Common myeloid progenitor, CD34-positive (primary cell): ENCODE measurements at regions of chr19 and their contacts with region 1.

Region 1: GRCh38 chr19:29873024-29873800 is 61.4 kb downstream of the CCNE1 start:
- DNase-seq: peak; percentile 63 to 73 (median 69)
- H3K4me3 ChIP-seq: peak overlapping the region; percentile 13 to 68 (median 58)
- H3K27ac ChIP-seq: no peak overlapping the region
- H3K4me1 ChIP-seq: peaks cover 0 to 21% (median 17%) of the 10 kb centered on the region in 4 experiments
- H3K27me3 ChIP-seq: peaks cover 0 to 22% (median 4%) of the 10 kb centered on the region in 5 experiments

Region 2: DNA sequence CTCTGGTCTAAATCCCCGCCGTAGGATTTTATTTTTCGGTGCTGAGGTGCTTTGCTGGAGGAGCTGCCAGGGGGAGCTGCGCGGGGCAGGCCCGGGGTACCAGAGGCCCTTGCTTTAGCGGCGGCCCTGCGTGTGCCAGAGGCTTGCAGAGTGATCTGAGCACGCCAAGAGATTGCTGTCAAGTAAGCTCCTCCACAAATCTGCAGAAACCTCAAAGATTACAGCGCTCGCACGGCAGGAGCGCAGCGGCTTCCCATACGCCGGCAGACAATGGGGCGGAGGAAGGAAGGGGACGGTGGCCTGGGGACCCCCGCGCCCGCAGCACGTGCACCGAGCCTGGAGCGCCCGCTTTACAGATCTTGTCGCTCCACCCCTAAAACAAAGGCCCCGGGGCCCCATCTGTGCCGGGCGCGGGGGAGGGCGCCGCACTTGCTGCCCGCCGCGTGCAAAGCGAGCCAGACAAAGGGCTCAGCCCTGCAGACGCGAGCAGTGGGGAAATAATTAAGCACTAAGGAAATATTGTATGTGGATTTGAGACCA is 149.0 kb before region 1 on chr19:
- CTCF ChIA-PET with region 1: interaction called, 12 read pairs
- POLR2A ChIA-PET with region 1: no interaction called
- DNase-seq: peak; percentile 35 to 80 (median 72)
- H3K4me3 ChIP-seq: peak overlapping the region in 6 of 7 experiments; percentile 29 to 58 (median 45)
- H3K27ac ChIP-seq: no peak overlapping the region
- H3K4me1 ChIP-seq: peaks cover 0 to 16% (median 14%) of the 10 kb centered on the region in 4 experiments
- H3K27me3 ChIP-seq: no peaks in the 10 kb centered on the region

Region 3: DNA sequence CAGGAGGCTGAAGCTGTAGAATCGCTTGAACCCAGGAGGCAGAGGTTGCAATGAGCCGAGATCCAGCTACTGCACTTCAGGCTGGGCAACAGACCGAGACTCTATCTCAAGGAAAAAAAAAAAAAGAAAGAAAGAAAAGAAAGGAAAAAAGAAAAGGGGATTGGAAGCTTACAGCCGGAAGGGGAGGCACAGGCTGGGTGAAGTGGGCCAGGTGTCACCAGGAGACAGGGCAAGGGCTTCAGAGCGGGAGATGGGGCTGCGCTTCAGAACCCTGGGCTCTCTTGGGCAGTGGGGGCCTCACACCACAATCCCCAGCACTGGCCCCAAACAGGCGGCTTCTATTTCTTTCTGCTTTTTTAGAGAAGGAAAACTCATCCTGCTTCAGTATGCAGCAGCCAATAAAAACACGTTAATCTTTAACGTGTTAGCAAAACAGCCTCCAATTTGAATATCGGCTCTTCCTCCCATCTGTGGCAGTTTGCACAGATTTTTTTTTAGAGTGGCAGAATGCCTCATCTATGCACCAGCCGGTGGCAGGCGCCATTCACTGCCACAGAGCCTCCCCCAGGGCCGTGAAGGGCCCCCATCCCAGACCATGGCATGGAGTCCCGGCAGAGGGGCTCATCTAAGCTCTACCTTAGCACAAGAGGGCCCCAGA is 111.5 kb before region 1 on chr19:
- CTCF ChIA-PET with region 1: interaction called, 39 read pairs
- POLR2A ChIA-PET with region 1: no interaction called
- DNase-seq: no peak
- H3K4me3 ChIP-seq: no peak overlapping the region
- H3K27ac ChIP-seq: no peak overlapping the region
- H3K4me1 ChIP-seq: peaks cover 0 to 3% (median 1%) of the 10 kb centered on the region in 4 experiments
- H3K27me3 ChIP-seq: no peaks in the 10 kb centered on the region

Region 4: GRCh38 chr19:29771708-29772414 is 101.4 kb before region 1 on chr19:
- CTCF ChIA-PET with region 1: interaction called, 10 read pairs
- POLR2A ChIA-PET with region 1: no interaction called
- DNase-seq: peak; percentile 31 to 63 (median 50)
- H3K4me3 ChIP-seq: no peak overlapping the region
- H3K27ac ChIP-seq: no peak overlapping the region
- H3K4me1 ChIP-seq: peaks cover 0 to 18% (median 15%) of the 10 kb centered on the region in 4 experiments
- H3K27me3 ChIP-seq: no peaks in the 10 kb centered on the region

Region 5: GRCh38 chr19:29806098-29806866 is 66.9 kb before region 1 on chr19:
- CTCF ChIA-PET with region 1: no interaction called
- POLR2A ChIA-PET with region 1: no interaction called
- DNase-seq: no peak
- H3K4me3 ChIP-seq: no peak overlapping the region
- H3K27ac ChIP-seq: no peak overlapping the region
- H3K4me1 ChIP-seq: peaks cover 0 to 9% (median 6%) of the 10 kb centered on the region in 4 experiments
- H3K27me3 ChIP-seq: no peaks in the 10 kb centered on the region

Region 6: GRCh38 chr19:29858000-29858596 is 15.1 kb before region 1 on chr19:
- CTCF ChIA-PET with region 1: interaction called, 16 read pairs
- POLR2A ChIA-PET with region 1: no interaction called
- DNase-seq: peak; percentile 29 to 54 (median 53)
- H3K4me3 ChIP-seq: no peak overlapping the region
- H3K27ac ChIP-seq: no peak overlapping the region
- H3K4me1 ChIP-seq: peaks cover 0 to 4% (median 3%) of the 10 kb centered on the region in 4 experiments
- H3K27me3 ChIP-seq: peaks cover 0 to 3% (median 0%) of the 10 kb centered on the region in 5 experiments